MCF 10A (cell line): ENCODE measurements at regions of chr7 and their contacts with region 1.

Region 1: GRCh38 chr7:17769918-17770317 is 170.4 kb downstream of the SNX13 start:
- DNase-seq: peak; percentile 76
- H3K4me3 Mint-ChIP-seq: no peak overlapping the region
- H3K27ac Mint-ChIP-seq: no peak overlapping the region
- H3K4me1 Mint-ChIP-seq: peaks cover 35% of the 10 kb centered on the region
- H3K27me3 Mint-ChIP-seq: no peaks in the 10 kb centered on the region
- CTCF ChIP-seq: peak; percentile 77

Region 2: GRCh38 chr7:17041324-17041723 is 728.6 kb before region 1 on chr7:
- CTCF ChIA-PET with region 1: no interaction called
- POLR2A ChIA-PET with region 1: no interaction called
- intact Hi-C with region 1: no loop called
- DNase-seq: peak; percentile 73
- H3K4me3 Mint-ChIP-seq: no peak overlapping the region
- H3K27ac Mint-ChIP-seq: peak overlapping the region; percentile 61
- H3K4me1 Mint-ChIP-seq: peaks cover 27% of the 10 kb centered on the region
- H3K27me3 Mint-ChIP-seq: no peaks in the 10 kb centered on the region
- CTCF ChIP-seq: no peak

Region 3: GRCh38 chr7:17706734-17707133 is 63.2 kb before region 1 on chr7:
- CTCF ChIA-PET with region 1: interaction called, 8 read pairs
- POLR2A ChIA-PET with region 1: interaction called, 4 read pairs
- intact Hi-C with region 1: loop called (anchors 2 kb)
- DNase-seq: peak; percentile 83
- H3K4me3 Mint-ChIP-seq: no peak overlapping the region
- H3K27ac Mint-ChIP-seq: peak overlapping the region; percentile 55
- H3K4me1 Mint-ChIP-seq: peaks cover 7% of the 10 kb centered on the region
- H3K27me3 Mint-ChIP-seq: no peaks in the 10 kb centered on the region
- CTCF ChIP-seq: peak; percentile 67

Region 4: GRCh38 chr7:17940302-17940883 is 170.5 kb after region 1 on chr7 and contains the start of gene SNX13:
- CTCF ChIA-PET with region 1: interaction called, 7 read pairs
- POLR2A ChIA-PET with region 1: interaction called, 11 read pairs
- intact Hi-C with region 1: loop called (anchors 2 kb)
- DNase-seq: peak; percentile 90
- H3K4me3 Mint-ChIP-seq: peak within 1 kb of the TSS; percentile 100
- H3K27ac Mint-ChIP-seq: peak within 1 kb of the TSS; percentile 99
- H3K4me1 Mint-ChIP-seq: peaks cover 29% of the 10 kb centered on the region
- H3K27me3 Mint-ChIP-seq: no peaks in the 10 kb centered on the region
- CTCF ChIP-seq: peak; percentile 19
- total RNA-seq, gene SNX13: 38.5 and 42.0 TPM in 2 replicates

Region 5: GRCh38 chr7:18119985-18120384 is 350.1 kb after region 1 on chr7:
- CTCF ChIA-PET with region 1: interaction called, 7 read pairs
- POLR2A ChIA-PET with region 1: no interaction called
- intact Hi-C with region 1: loop called (anchors 1 kb)
- DNase-seq: peak; percentile 35
- H3K4me3 Mint-ChIP-seq: no peak overlapping the region
- H3K27ac Mint-ChIP-seq: no peak overlapping the region
- H3K4me1 Mint-ChIP-seq: no peaks in the 10 kb centered on the region
- H3K27me3 Mint-ChIP-seq: no peaks in the 10 kb centered on the region
- CTCF ChIP-seq: no peak

Region 6: DNA sequence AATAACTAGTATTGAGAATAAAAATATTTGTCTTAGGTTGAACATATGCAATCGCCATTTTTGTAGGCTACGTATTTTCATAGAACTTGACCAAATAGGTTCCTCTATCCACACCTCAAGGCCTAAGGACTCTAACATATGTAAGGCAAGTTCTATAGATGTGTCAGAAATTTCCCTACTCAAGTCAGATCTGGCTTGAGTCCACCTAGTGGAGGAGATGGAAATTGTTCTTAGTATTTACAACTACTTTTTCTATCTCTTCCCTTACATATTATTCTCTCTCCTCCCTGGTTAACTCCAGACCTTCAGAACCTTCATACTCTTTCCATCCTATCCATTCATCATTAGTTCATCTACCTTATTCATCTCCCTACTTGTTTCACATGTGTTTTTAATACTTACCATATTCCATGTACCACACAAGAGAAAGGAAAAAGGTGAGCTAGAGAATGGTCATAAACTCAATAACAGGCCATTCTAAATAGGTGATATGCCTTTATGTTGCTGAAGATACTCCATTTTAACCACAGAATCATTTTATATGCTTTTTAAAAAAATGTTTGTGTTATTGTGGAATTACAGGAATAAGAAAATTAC is 551.2 kb after region 1 on chr7:
- CTCF ChIA-PET with region 1: interaction called, 9 read pairs
- POLR2A ChIA-PET with region 1: interaction called, 6 read pairs
- intact Hi-C with region 1: loop called (anchors 1 kb)
- DNase-seq: peak; percentile 58
- H3K4me3 Mint-ChIP-seq: no peak overlapping the region
- H3K27ac Mint-ChIP-seq: no peak overlapping the region
- H3K4me1 Mint-ChIP-seq: peaks cover 9% of the 10 kb centered on the region
- H3K27me3 Mint-ChIP-seq: no peaks in the 10 kb centered on the region
- CTCF ChIP-seq: peak; percentile 47